Activated CD8-positive, alpha-beta T cell treated with anti-CD3 and anti-CD28 coated beads, Interleukin-2, amount 10 ng/mL, durations not matched to agents 7 days and 5 days (primary cell): ENCODE measurements at regions of chr14 and their contacts with region 1.

Region 1: GRCh38 chr14:99946652-99947489 is 118.4 kb upstream of the EVL start:
- DNase-seq: peak; percentile 62
- ATAC-seq: peak; percentile 86
- H3K4me3 Mint-ChIP-seq: no peak overlapping the region
- H3K27ac Mint-ChIP-seq: no peak overlapping the region
- H3K4me1 Mint-ChIP-seq: peaks cover 9% of the 10 kb centered on the region
- H3K27me3 Mint-ChIP-seq: peaks cover 15% of the 10 kb centered on the region

Region 2: GRCh38 chr14:99930420-99931274 is 16.2 kb before region 1 on chr14:
- CTCF ChIA-PET with region 1: interaction called, 11 read pairs
- POLR2A ChIA-PET with region 1: no interaction called
- DNase-seq: no peak
- ATAC-seq: no peak
- H3K4me3 Mint-ChIP-seq: no peak overlapping the region
- H3K27ac Mint-ChIP-seq: no peak overlapping the region
- H3K4me1 Mint-ChIP-seq: no peaks in the 10 kb centered on the region
- H3K27me3 Mint-ChIP-seq: peaks cover 5% of the 10 kb centered on the region